A549 (cell line): ENCODE measurements at regions of chr12 and their contacts with region 1.

Region 1: GRCh38 chr12:98730412-98730811 is 85.3 kb downstream of the APAF1 start:
- DNase-seq: no peak
- ATAC-seq: no peak
- H3K4me3 ChIP-seq: no peak overlapping the region
- H3K27ac ChIP-seq: no peak overlapping the region
- H3K4me1 ChIP-seq: no peaks in the 10 kb centered on the region
- CTCF ChIP-seq: no peak
- EP300 ChIP-seq: no peak
- POLR2A ChIP-seq: no peak
- RAD21 ChIP-seq: no peak

Region 2: GRCh38 chr12:98741556-98742265 is 11.3 kb after region 1 on chr12:
- CTCF ChIA-PET with region 1: interaction called, 13 read pairs
- POLR2A ChIA-PET with region 1: no interaction called
- DNase-seq: no peak
- ATAC-seq: no peak
- H3K4me3 ChIP-seq: no peak overlapping the region
- H3K27ac ChIP-seq: no peak overlapping the region
- H3K4me1 ChIP-seq: peaks cover 8% of the 10 kb centered on the region; the same call in 2 of the 3 replicates
- CTCF ChIP-seq: no peak
- EP300 ChIP-seq: no peak
- POLR2A ChIP-seq: no peak
- RAD21 ChIP-seq: no peak